ENCODE measurements at regions of chr6 and their contacts with region 1.

Region 1: GRCh38 chr6:8983188-8983688 is 547.9 kb upstream of the SLC35B3 start:
- DNase-seq: peak; percentile 12 to 47 (median 37)
- H3K4me3 ChIP-seq: no peak overlapping the region
- H3K27ac ChIP-seq: no peak overlapping the region
- H3K4me1 ChIP-seq: no peaks in the 10 kb centered on the region
- H3K27me3 ChIP-seq: no peaks in the 10 kb centered on the region
- CTCF ChIP-seq: peak; percentile 23 to 57 (median 56)
- EP300 ChIP-seq: no peak
- POLR2A ChIP-seq: no peak

Region 2: GRCh38 chr6:8526624-8527023 is 456.6 kb before region 1 on chr6:
- intact Hi-C with region 1: no loop called
- DNase-seq: no peak
- H3K4me3 ChIP-seq: no peak overlapping the region
- H3K27ac ChIP-seq: no peak overlapping the region
- H3K4me1 ChIP-seq: no peaks in the 10 kb centered on the region
- H3K27me3 ChIP-seq: no peaks in the 10 kb centered on the region
- CTCF ChIP-seq: no peak
- EP300 ChIP-seq: no peak
- POLR2A ChIP-seq: no peak

Region 3: DNA sequence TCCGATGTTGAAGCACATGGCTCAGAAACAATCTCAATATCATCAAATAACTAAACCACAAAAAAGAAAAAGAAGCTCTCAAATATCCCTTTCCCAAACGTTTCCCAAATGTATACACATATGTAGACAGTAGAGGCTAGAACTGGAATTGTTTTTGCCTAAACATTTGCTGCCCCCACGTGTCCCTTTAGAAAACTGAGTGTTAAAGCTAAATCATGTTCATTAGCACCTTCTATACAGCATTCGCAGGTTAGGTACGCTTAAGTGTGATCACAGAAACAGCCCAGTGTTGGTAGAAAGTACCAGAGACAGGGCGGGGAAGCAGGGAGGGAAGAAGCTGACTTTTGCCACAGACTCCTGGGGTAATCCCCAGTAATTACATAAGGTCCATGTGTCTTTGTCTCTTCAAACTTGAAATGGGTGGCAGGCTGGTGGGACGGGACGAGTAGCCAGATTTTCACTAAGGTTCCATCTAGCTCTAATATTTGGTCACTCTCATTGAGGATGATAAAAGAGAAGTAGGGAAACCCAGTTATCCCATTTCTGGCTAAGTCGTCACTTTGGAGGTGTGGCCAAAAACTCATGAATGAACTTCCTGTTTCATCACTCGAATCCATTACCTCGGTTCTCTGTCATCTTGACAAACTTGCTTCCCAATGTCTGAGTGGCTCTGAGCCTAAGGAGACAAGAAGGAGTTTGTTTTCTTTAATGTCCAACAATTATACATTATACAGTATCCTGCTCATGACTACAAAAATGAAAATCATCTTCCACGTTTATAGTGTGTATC is 1446.6 kb after region 1 on chr6:
- intact Hi-C with region 1: loop called in 2 of 4 experiments (anchors 5 to 10 kb)
- DNase-seq: no peak
- H3K4me3 ChIP-seq: no peak overlapping the region
- H3K27ac ChIP-seq: no peak overlapping the region
- H3K4me1 ChIP-seq: peaks cover 3% of the 10 kb centered on the region
- H3K27me3 ChIP-seq: no peaks in the 10 kb centered on the region
- CTCF ChIP-seq: no peak
- EP300 ChIP-seq: no peak
- POLR2A ChIP-seq: no peak

Region 4: GRCh38 chr6:10434692-10435376 is 1451.6 kb after region 1 on chr6:
- intact Hi-C with region 1: loop called in 2 of 4 experiments (anchors 5 to 10 kb)
- DNase-seq: no peak
- H3K4me3 ChIP-seq: no peak overlapping the region
- H3K27ac ChIP-seq: no peak overlapping the region
- H3K4me1 ChIP-seq: no peaks in the 10 kb centered on the region
- H3K27me3 ChIP-seq: no peaks in the 10 kb centered on the region
- CTCF ChIP-seq: no peak
- EP300 ChIP-seq: no peak
- POLR2A ChIP-seq: no peak